ENCODE measurements at regions of chr14 and their contacts with region 1.

Region 1: GRCh38 chr14:68939893-68940613 is 39.0 kb downstream of the ACTN1 start:
- DNase-seq: peak; percentile 40
- ATAC-seq: peak; percentile 25
- H3K4me3 Mint-ChIP-seq: no peak overlapping the region
- H3K27ac Mint-ChIP-seq: no peak overlapping the region
- H3K4me1 Mint-ChIP-seq: peaks cover 85% of the 10 kb centered on the region
- H3K27me3 Mint-ChIP-seq: no peaks in the 10 kb centered on the region
- CTCF ChIP-seq: no peak

Region 2: GRCh38 chr14:67908052-67908754 is 1031.8 kb before region 1 on chr14:
- CTCF ChIA-PET with region 1: no interaction called
- POLR2A ChIA-PET with region 1: no interaction called
- DNase-seq: no peak
- ATAC-seq: 0 out of 2 replicates have a peak, but pooled peaks have one; percentile 38
- H3K4me3 Mint-ChIP-seq: no peak overlapping the region
- H3K27ac Mint-ChIP-seq: no peak overlapping the region
- H3K4me1 Mint-ChIP-seq: peaks cover 3% of the 10 kb centered on the region; the same call in 1 of the 2 replicates
- H3K27me3 Mint-ChIP-seq: no peaks in the 10 kb centered on the region
- CTCF ChIP-seq: no peak

Region 3: GRCh38 chr14:68926236-68926635 is 13.8 kb before region 1 on chr14:
- CTCF ChIA-PET with region 1: interaction called, 48 read pairs
- POLR2A ChIA-PET with region 1: interaction called, 4 read pairs
- DNase-seq: no peak
- ATAC-seq: peak; percentile 13; the same call in 1 of the 2 replicates
- H3K4me3 Mint-ChIP-seq: no peak overlapping the region
- H3K27ac Mint-ChIP-seq: no peak overlapping the region
- H3K4me1 Mint-ChIP-seq: peaks cover 34% of the 10 kb centered on the region
- H3K27me3 Mint-ChIP-seq: no peaks in the 10 kb centered on the region
- CTCF ChIP-seq: no peak

Region 4: GRCh38 chr14:68955164-68955921 is 15.3 kb after region 1 on chr14:
- CTCF ChIA-PET with region 1: interaction called, 10 read pairs
- POLR2A ChIA-PET with region 1: interaction called, 3 read pairs
- DNase-seq: no peak
- ATAC-seq: no peak
- H3K4me3 Mint-ChIP-seq: no peak overlapping the region
- H3K27ac Mint-ChIP-seq: peak overlapping the region; percentile 87
- H3K4me1 Mint-ChIP-seq: peaks cover 69% of the 10 kb centered on the region
- H3K27me3 Mint-ChIP-seq: no peaks in the 10 kb centered on the region
- CTCF ChIP-seq: no peak

Measured in WTC11 (cell line).